ENCODE measurements at regions of chr11 and their contacts with region 1.

Region 1: DNA sequence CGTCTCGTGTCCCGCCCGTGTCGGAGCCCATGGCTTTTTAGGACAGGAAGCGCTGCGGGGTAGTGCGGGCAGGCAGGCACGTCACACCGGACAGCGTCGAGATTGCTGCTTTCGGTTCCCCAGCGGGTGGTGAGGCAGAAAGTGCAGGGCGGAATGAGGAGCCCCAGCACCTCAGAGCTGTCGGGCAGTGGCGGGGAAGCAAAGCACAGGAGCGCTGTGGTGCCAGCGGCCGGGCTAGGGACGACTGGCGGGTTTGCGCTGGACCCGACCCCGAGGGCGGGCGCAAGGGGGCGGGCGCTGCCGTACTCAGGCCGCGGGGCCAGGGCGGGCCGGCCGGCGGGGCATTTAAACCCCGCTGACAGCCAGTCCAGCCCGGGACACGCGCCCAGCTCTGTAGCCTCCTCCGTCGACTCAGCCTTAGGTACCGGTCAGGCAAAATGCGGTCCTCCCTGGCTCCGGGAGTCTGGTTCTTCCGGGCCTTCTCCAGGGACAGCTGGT is at the start of gene SLC37A2:
- DNase-seq: peak; percentile 64
- H3K4me3 ChIP-seq: peak within 1 kb of the TSS; percentile 64 to 87 (median 74)
- H3K27ac ChIP-seq: no peak within 1 kb of the TSS
- H3K4me1 ChIP-seq: peaks cover 9% of the 10 kb centered on the region
- H3K27me3 ChIP-seq: no peaks in the 10 kb centered on the region
- CTCF ChIP-seq: peak; percentile 7 to 12
- POLR2A ChIP-seq: no peak
- total RNA-seq, gene SLC37A2: 1.1 and 1.3 TPM in 2 replicates

Region 2: GRCh38 chr11:124577716-124578427 is 485.1 kb before region 1 on chr11:
- CTCF ChIA-PET with region 1: no interaction called
- POLR2A ChIA-PET with region 1: no interaction called
- dilution Hi-C with region 1: no loop called
- intact Hi-C with region 1: no loop called
- DNase-seq: no peak
- H3K4me3 ChIP-seq: no peak overlapping the region
- H3K27ac ChIP-seq: no peak overlapping the region
- H3K4me1 ChIP-seq: no peaks in the 10 kb centered on the region
- H3K27me3 ChIP-seq: peaks cover 2 to 8% of the 10 kb centered on the region in 2 experiments
- CTCF ChIP-seq: no peak
- POLR2A ChIP-seq: no peak

Region 3: GRCh38 chr11:125036933-125037332 is 26.0 kb before region 1 on chr11:
- CTCF ChIA-PET with region 1: no interaction called
- POLR2A ChIA-PET with region 1: no interaction called
- dilution Hi-C with region 1: no loop called
- intact Hi-C with region 1: loop called (anchors 2 kb)
- DNase-seq: peak; percentile 70
- H3K4me3 ChIP-seq: no peak overlapping the region
- H3K27ac ChIP-seq: peak overlapping the region; percentile 78
- H3K4me1 ChIP-seq: peaks cover 8% of the 10 kb centered on the region
- H3K27me3 ChIP-seq: no peaks in the 10 kb centered on the region
- CTCF ChIP-seq: no peak
- POLR2A ChIP-seq: no peak